ENCODE measurements at regions of chr12 and their contacts with region 1.

Region 1: DNA sequence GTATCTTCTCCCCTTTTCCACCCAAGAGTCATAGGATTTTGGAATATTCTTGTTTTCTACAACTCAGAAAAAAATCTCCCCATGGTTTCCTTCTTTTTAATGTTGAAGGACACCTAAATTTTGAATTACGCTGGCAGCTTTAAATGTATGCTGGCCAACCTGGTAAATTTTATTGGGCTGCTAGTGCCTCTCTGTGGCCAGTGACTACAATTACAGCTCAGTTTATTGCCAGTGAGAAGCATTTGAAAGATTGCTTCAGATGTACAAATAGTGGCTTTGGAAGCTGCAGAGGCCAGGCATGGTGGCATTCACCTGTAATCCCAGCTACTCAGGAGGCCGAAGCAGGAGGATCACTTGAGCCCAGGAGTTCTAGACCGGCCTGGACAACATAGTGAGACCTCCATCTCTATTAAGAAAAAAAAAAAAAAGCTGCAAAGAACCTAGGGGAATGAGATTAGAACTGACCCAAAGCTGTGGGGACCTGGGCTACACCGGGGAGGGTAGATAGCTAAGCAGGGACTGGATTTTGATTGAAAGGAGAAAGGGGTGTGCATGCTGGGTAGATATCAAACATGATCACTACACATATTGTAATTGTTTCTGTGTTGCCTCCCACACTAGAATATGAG is 7.6 kb upstream of the RAB21 start:
- DNase-seq: peak; percentile 39
- ATAC-seq: peak; percentile 91
- H3K4me3 Mint-ChIP-seq: no peak overlapping the region
- H3K27ac Mint-ChIP-seq: no peak overlapping the region
- H3K4me1 Mint-ChIP-seq: no peaks in the 10 kb centered on the region
- H3K27me3 Mint-ChIP-seq: peaks cover 9% of the 10 kb centered on the region
- CTCF ChIP-seq: peak; percentile 83

Region 2: DNA sequence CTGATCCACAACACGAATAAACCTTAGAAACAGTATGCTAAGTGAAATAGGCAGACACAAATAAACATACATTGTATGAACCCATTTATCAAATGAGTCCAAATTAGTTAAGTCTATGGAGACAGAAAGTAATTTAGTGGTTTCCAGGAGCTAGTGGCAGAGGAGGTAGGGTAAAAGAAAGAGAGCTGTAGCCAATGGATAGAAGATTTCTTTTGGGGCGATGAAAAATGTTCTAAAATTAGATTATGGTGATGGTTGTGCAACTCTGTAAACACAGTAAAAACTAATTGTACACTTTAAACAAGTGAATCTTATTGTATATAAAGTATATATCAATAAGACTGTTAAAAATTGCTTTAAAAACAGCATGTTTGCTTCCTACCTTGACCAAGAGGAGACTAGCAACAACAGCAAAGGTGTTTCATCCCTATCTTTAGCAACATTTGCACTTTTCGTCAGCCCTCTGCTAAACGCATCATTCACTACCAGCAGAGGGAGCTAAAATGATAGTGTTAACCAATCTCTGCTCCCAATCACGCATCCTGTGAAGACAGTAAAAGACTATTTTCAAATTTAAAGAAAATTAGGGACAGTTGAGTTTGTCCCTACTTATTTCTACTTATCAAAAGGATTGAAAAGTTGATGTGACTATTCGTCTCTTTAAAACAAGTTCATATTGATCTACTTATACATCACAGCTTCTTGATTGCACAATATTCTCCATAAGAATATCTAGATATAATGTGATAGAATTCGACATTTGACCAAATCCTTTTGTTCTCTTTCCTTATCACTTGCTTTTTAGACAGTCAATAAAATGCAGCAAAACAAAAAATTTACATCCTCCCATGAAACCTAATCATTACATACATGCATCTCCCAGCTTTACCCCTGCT is 331.5 kb before region 1 on chr12:
- CTCF ChIA-PET with region 1: interaction called, 93 read pairs
- POLR2A ChIA-PET with region 1: interaction called, 4 read pairs
- intact Hi-C with region 1: loop called (anchors 1 kb)
- DNase-seq: peak; percentile 27
- ATAC-seq: peak; percentile 61
- H3K4me3 Mint-ChIP-seq: no peak overlapping the region
- H3K27ac Mint-ChIP-seq: no peak overlapping the region
- H3K4me1 Mint-ChIP-seq: no peaks in the 10 kb centered on the region
- H3K27me3 Mint-ChIP-seq: peaks cover 6% of the 10 kb centered on the region
- CTCF ChIP-seq: peak; percentile 80

Region 3: DNA sequence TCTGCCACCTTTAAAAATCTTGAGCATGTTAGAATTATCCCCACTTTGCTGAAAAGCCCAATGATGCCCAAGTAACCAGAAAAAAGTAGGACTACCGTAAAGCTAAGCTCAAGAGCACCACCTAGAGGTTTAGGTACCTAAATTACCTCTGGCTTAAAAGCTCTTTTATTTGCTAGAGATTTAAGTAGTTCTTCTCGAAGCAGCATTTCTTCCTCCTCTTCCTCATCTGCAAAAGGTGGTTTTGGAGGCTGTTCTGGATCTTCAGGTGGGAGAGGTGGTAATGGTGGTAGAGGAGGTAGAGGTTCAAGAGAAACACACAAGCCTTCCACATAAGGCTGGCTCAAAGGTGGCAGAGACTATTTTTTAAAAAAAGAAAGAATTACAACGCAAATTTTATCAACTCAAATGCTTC is 110.4 kb before region 1 on chr12:
- CTCF ChIA-PET with region 1: interaction called, 37 read pairs
- POLR2A ChIA-PET with region 1: no interaction called
- intact Hi-C with region 1: loop called (anchors 5 kb)
- DNase-seq: no peak
- ATAC-seq: peak; percentile 77
- H3K4me3 Mint-ChIP-seq: no peak overlapping the region
- H3K27ac Mint-ChIP-seq: peak overlapping the region; percentile 75
- H3K4me1 Mint-ChIP-seq: peaks cover 10% of the 10 kb centered on the region
- H3K27me3 Mint-ChIP-seq: no peaks in the 10 kb centered on the region
- CTCF ChIP-seq: peak; percentile 75

Region 4: GRCh38 chr12:71648537-71648936 is 98.6 kb before region 1 on chr12:
- CTCF ChIA-PET with region 1: interaction called, 16 read pairs
- POLR2A ChIA-PET with region 1: no interaction called
- intact Hi-C with region 1: no loop called
- DNase-seq: no peak
- ATAC-seq: no peak
- H3K4me3 Mint-ChIP-seq: no peak overlapping the region
- H3K27ac Mint-ChIP-seq: no peak overlapping the region
- H3K4me1 Mint-ChIP-seq: peaks cover 25% of the 10 kb centered on the region
- H3K27me3 Mint-ChIP-seq: no peaks in the 10 kb centered on the region
- CTCF ChIP-seq: no peak

Region 5: DNA sequence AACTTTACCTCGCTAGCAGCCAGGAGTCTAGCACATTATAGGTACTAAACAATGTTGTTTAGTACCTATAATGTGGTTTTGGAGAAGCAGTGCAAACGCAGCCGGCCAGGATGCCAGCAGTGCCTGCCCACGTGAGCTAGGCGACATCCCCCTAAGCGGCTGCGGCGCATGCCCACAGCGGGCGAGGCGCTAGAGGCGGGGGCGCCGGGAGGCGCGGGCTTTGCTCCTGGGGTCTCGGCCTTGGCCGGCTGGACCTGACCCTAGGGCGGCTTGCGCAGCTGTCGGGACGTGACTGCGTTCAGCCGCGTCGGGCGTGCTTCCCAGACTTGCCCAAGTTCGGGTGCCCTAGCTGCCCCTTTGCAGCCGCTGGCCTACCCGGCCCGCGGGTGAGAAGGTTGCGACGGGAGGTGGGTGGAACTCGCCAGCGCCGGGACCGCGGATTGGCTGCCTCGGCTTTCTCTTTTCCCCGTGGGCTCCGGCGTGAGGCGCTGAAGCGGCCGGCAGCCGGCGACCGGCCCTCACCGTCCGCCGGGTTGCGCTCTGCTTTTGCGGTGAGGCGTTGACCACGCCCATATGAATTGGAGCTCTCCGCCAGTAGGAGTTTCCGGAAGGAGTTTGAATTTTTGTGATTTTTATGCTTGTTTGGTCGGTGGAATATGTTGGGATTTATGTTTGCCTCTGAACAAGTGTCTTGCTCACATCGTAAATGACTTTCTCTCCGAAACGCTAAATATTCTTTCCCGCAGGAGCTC is 61.0 kb before region 1 on chr12 and contains the start of gene TMEM19:
- CTCF ChIA-PET with region 1: interaction called, 43 read pairs
- POLR2A ChIA-PET with region 1: no interaction called
- intact Hi-C with region 1: no loop called
- DNase-seq: peak; percentile 86
- ATAC-seq: peak; percentile 89
- H3K4me3 Mint-ChIP-seq: peak within 1 kb of the TSS; percentile 94
- H3K27ac Mint-ChIP-seq: peak within 1 kb of the TSS; percentile 94
- H3K4me1 Mint-ChIP-seq: peaks cover 19% of the 10 kb centered on the region
- H3K27me3 Mint-ChIP-seq: no peaks in the 10 kb centered on the region
- CTCF ChIP-seq: no peak
- total RNA-seq, gene TMEM19: 14.2 to 16.5 TPM

Region 6: GRCh38 chr12:71810905-71811304 is 63.8 kb after region 1 on chr12:
- CTCF ChIA-PET with region 1: no interaction called
- POLR2A ChIA-PET with region 1: no interaction called
- intact Hi-C with region 1: no loop called
- DNase-seq: no peak
- ATAC-seq: no peak
- H3K4me3 Mint-ChIP-seq: no peak overlapping the region
- H3K27ac Mint-ChIP-seq: no peak overlapping the region
- H3K4me1 Mint-ChIP-seq: no peaks in the 10 kb centered on the region
- H3K27me3 Mint-ChIP-seq: peaks cover 16% of the 10 kb centered on the region
- CTCF ChIP-seq: no peak

Region 7: DNA sequence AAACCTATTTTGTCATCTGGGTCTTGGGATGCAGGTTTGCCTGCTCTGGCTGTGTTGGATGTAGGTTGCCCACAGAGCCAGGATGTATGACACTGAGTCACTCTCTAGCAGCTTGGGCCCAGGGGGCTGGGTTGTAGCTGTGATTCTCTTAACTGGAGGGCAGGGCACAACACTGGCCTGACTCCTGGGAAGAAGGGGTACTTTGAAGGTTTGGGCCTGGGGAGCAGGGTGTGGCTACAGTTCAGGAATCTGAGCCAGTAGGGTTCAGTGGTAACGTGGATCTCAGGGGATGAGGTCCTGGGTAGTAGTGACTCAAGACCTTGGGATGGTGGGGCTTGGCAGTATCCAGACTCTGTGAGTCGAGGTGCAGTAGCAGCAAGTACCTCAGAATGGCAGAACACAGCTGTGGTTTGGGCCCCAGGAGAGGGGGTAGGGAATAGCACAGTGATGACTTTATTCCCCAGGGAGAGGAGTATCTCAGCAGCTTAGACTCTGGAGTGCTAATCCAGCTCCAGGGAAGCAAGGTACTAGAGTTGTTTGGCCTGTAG is 118.1 kb after region 1 on chr12:
- CTCF ChIA-PET with region 1: no interaction called
- POLR2A ChIA-PET with region 1: no interaction called
- intact Hi-C with region 1: no loop called
- DNase-seq: peak; percentile 25
- ATAC-seq: peak; percentile 83
- H3K4me3 Mint-ChIP-seq: no peak overlapping the region
- H3K27ac Mint-ChIP-seq: no peak overlapping the region
- H3K4me1 Mint-ChIP-seq: peaks cover 38% of the 10 kb centered on the region
- H3K27me3 Mint-ChIP-seq: no peaks in the 10 kb centered on the region
- CTCF ChIP-seq: no peak

Measured in activated CD8-positive, alpha-beta T cell treated with anti-CD3 and anti-CD28 coated beads for 36 hours (primary cell).